ENCODE measurements at regions of chr2 and their contacts with region 1.

Region 1: DNA sequence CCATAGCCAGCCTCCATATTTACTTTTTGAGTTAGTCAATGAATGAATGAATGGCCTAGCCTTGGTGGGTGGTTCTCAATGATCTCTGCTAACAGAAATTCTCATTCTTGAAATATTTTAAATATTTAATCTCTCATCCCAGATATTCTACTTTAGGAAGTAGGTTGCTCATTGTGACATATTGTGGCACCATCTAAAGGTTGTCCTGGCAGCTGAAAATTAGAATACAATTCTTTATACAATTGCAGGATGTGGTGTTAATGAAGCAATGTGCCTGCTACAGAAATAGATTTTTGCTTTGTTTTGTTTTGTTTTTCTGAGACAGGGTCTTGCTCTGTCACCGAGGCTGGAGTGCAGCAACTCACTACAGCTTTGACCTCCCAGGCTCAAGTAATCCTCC is 35.8 kb downstream of the SCG2 start:
- DNase-seq: no peak
- ATAC-seq: no peak
- H3K4me3 ChIP-seq: no peak overlapping the region
- H3K27ac ChIP-seq: no peak overlapping the region
- H3K4me1 ChIP-seq: no peaks in the 10 kb centered on the region
- H3K27me3 ChIP-seq: no peaks in the 10 kb centered on the region
- CTCF ChIP-seq: no peak
- EP300 ChIP-seq: no peak
- POLR2A ChIP-seq: no peak
- RAD21 ChIP-seq: no peak

Region 2: DNA sequence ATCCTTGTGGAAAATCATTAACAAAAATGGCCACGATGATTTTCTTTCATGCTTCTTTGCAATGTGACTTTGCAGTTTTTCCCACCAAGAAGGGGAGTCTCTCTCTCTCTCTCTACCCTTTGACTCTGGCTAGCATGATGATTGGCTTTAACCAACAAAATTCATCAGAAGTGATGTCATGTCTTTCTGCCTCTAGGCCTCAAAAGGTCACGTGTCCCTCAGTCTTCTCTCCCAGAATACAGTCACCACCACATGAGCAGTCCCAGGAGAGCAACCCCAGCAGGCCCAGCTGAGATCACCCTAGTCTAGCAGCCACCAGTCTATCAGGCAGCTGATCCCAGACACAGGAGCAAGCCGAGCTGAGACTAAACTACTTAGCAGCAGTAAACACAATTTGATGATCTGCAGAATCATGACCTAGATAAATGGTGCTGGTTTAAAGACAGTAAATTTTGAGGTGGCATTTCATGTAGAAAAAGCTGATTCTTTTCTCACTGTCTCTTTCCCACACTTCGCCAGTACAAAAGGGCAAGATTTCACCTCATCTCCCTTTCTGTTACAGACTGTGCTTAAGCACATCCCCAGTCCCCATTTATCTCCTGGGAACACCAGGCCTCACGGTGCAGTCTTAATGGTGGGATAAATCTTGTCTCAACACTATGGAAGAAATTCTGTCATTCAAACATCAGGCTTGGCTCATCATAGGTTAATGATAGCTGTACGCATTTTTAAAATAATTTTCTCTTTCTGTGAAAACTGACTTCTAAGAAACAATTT is 96.9 kb before region 1 on chr2:
- CTCF ChIA-PET with region 1: no interaction called
- POLR2A ChIA-PET with region 1: no interaction called
- RAD21 ChIA-PET with region 1: no interaction called
- SMC1A ChIA-PET with region 1: no interaction called
- in situ Hi-C with region 1: no loop called
- intact Hi-C with region 1: loop called (anchors 5 kb)
- DNase-seq: no peak
- ATAC-seq: no peak
- H3K4me3 ChIP-seq: no peak overlapping the region
- H3K27ac ChIP-seq: no peak overlapping the region
- H3K4me1 ChIP-seq: no peaks in the 10 kb centered on the region
- H3K27me3 ChIP-seq: no peaks in the 10 kb centered on the region
- CTCF ChIP-seq: no peak
- EP300 ChIP-seq: no peak
- POLR2A ChIP-seq: no peak
- RAD21 ChIP-seq: no peak